B cell (primary cell): ENCODE measurements at regions of chr22 and their contacts with region 1.

Region 1: DNA sequence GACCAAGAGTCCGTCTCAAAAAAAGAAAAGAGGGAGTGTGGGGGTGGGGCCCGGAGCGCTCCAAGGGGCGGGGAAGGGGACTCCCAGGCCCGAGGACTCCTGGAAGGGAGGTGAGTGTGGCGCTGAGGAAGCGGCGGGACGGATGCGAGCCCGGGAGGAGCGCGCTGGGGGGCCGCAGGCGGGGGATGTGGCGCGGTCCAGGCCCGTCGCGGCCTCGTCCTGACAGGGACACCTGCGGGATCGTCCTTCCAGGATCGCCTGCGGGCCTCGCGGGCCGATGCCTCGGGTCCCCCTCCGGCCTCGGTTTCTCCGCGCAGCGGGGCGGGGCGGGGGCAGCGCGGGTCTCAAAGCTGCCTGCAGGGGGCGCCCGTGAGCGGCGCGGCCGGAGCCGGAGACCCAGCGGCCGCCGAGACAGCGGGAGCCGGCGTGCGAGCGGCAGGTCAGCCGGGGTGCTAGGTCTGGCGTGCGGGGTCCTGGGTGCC is 3.8 kb upstream of the ADORA2A start:
- DNase-seq: peak; percentile 79
- ATAC-seq: peak; percentile 19
- H3K4me3 ChIP-seq: peak overlapping the region in 3 of 5 experiments; percentile 67 to 82 (median 68)
- H3K4me3 Mint-ChIP-seq: peak overlapping the region; percentile 66
- H3K27ac ChIP-seq: peak overlapping the region in 1 of 2 donors; percentile 65
- H3K27ac Mint-ChIP-seq: peak overlapping the region; percentile 26
- H3K4me1 ChIP-seq: peaks cover 38 to 51% of the 10 kb centered on the region in 2 donors
- H3K4me1 Mint-ChIP-seq: peaks cover 45% of the 10 kb centered on the region
- H3K27me3 ChIP-seq: peaks cover 0 to 3% (median 0%) of the 10 kb centered on the region in 4 experiments
- H3K27me3 Mint-ChIP-seq: no peaks in the 10 kb centered on the region
- CTCF ChIP-seq: peak; percentile 89

Region 2: DNA sequence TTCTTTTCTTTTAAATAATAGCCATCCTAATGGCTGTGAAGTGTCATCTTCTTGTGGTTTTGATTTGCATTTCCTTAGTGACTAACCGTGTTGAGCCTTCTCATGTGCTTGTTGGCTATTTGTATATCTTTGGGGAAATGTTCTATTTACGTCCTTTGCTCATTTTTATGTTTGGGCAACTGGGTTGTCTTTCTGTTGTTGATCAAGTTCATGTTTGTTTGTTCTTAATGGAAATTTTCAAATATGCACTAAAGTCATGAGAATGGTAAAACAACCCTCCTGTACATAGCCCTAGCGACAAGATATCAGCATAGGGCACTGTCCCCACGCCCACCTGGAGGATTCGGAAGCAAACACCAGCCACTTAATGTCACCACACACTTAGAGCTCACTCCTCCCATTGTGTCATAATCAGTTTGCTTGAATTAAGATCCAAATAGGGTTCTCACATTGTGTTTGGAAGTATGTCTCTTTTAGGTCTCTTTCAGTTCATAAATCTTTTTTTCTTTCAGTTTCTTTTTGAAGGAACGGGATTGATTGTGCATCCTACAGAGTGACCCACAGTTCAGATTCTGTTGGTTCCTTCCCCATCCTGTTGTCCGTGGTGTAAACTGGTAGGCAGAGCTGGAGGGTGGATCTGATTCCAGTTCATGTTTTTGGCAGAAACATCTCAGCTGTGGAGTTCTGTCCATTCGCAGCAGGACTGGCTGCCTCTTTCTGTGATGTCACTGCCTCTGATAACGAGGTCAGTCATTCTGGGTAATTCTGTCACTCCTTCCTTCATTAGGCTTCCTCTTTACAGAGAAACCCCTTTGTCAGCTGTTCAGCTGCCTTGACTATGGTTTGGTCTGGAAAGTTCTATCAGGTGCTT is 22.6 kb before region 1 on chr22:
- CTCF ChIA-PET with region 1: interaction called, 10 read pairs
- POLR2A ChIA-PET with region 1: no interaction called
- intact Hi-C with region 1: no loop called
- DNase-seq: peak; percentile 57
- ATAC-seq: peak; percentile 60
- H3K4me3 ChIP-seq: peak overlapping the region in 4 of 5 experiments; percentile 18 to 52 (median 24)
- H3K4me3 Mint-ChIP-seq: peak overlapping the region; percentile 82
- H3K27ac ChIP-seq: peak overlapping the region; percentile 75 to 81
- H3K27ac Mint-ChIP-seq: peak overlapping the region; percentile 87
- H3K4me1 ChIP-seq: peaks cover 10 to 53% of the 10 kb centered on the region in 2 donors
- H3K4me1 Mint-ChIP-seq: peaks cover 54% of the 10 kb centered on the region
- H3K27me3 ChIP-seq: no peaks in the 10 kb centered on the region
- H3K27me3 Mint-ChIP-seq: no peaks in the 10 kb centered on the region
- CTCF ChIP-seq: no peak

Region 3: GRCh38 chr22:24482575-24482974 is 59.0 kb after region 1 on chr22:
- CTCF ChIA-PET with region 1: interaction called, 67 read pairs
- POLR2A ChIA-PET with region 1: interaction called, 3 read pairs
- intact Hi-C with region 1: loop called (anchors 1 kb)
- DNase-seq: no peak
- ATAC-seq: no peak
- H3K4me3 ChIP-seq: no peak overlapping the region
- H3K4me3 Mint-ChIP-seq: no peak overlapping the region
- H3K27ac ChIP-seq: no peak overlapping the region
- H3K27ac Mint-ChIP-seq: no peak overlapping the region
- H3K4me1 ChIP-seq: no peaks in the 10 kb centered on the region
- H3K4me1 Mint-ChIP-seq: peaks cover 10% of the 10 kb centered on the region
- H3K27me3 ChIP-seq: no peaks in the 10 kb centered on the region
- H3K27me3 Mint-ChIP-seq: peaks cover 5% of the 10 kb centered on the region
- CTCF ChIP-seq: no peak

Region 4: GRCh38 chr22:24518771-24519485 is 95.4 kb after region 1 on chr22:
- CTCF ChIA-PET with region 1: interaction called, 157 read pairs
- POLR2A ChIA-PET with region 1: interaction called, 3 read pairs
- intact Hi-C with region 1: loop called (anchors 1 kb)
- DNase-seq: no peak
- ATAC-seq: no peak
- H3K4me3 ChIP-seq: no peak overlapping the region
- H3K4me3 Mint-ChIP-seq: no peak overlapping the region
- H3K27ac ChIP-seq: no peak overlapping the region
- H3K27ac Mint-ChIP-seq: no peak overlapping the region
- H3K4me1 ChIP-seq: peaks cover 6 to 14% of the 10 kb centered on the region in 2 donors
- H3K4me1 Mint-ChIP-seq: peaks cover 22% of the 10 kb centered on the region
- H3K27me3 ChIP-seq: peaks cover 0 to 4% (median 1%) of the 10 kb centered on the region in 4 experiments
- H3K27me3 Mint-ChIP-seq: peaks cover 9% of the 10 kb centered on the region
- CTCF ChIP-seq: no peak

Region 5: DNA sequence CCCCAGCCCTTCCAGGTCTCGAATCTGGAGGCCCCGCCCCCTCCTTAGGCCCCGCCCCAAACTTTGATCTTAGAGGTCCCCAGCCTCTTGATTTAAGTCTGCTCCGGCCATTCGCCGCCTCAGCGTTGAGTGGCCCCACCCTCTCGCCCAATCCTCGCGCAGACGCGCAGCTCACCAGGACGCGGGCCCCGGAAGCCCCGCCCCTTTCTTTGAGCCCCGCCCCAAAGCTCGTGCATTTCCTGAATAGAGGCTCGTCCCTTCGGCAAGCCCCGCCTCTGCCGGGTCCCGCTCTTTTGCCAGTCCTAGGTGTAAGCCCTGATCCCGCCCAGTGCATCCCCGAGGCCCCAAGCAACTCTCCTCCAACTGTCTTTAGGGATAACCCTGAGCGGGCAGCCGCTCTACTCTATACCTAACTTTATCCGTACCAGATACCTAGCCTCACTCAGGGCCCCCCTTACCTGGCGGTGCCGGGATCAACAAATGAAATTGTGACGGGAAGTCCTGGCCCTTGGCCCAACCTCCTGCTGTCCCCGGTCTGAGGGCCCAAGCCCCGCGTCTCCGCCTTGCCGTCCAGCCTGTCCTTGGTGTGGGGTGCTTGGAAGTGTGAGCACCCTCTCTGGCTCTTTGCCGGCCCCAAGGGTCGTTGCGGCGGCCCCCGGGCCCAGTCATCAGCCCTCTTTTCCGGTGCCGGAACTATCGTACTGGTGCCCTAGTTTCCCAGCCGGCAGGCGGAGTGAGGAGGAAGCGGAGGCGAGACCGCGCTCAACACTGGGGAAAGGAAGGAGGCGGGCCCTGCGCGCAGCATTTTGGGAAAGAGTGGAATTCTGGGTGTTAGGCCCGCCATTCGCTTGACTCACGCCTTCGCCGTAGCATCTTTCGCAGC is 131.8 kb after region 1 on chr22 and contains the start of gene SNRPD3:
- CTCF ChIA-PET with region 1: interaction called, 4 read pairs
- POLR2A ChIA-PET with region 1: interaction called, 14 read pairs
- intact Hi-C with region 1: loop called (anchors 2 kb)
- DNase-seq: peak; percentile 99
- ATAC-seq: peak; percentile 80
- H3K4me3 ChIP-seq: peak within 1 kb of the TSS; percentile 64 to 99 (median 94)
- H3K4me3 Mint-ChIP-seq: peak within 1 kb of the TSS; percentile 99
- H3K27ac ChIP-seq: peak within 1 kb of the TSS; percentile 87 to 96
- H3K27ac Mint-ChIP-seq: peak within 1 kb of the TSS; percentile 98
- H3K4me1 ChIP-seq: peaks cover 64 to 73% of the 10 kb centered on the region in 2 donors
- H3K4me1 Mint-ChIP-seq: peaks cover 80% of the 10 kb centered on the region
- H3K27me3 ChIP-seq: no peaks in the 10 kb centered on the region
- H3K27me3 Mint-ChIP-seq: no peaks in the 10 kb centered on the region
- CTCF ChIP-seq: no peak
- total RNA-seq, gene SNRPD3: 76.7 and 79.0 TPM in 2 replicates